Caco-2 (cell line): ENCODE measurements at regions of chr6 and their contacts with region 1.

Region 1: GRCh38 chr6:130825772-130826441 is 1.3 kb upstream of the SMLR1 start:
- DNase-seq: no peak
- H3K4me3 ChIP-seq: no peak overlapping the region
- H3K4me3 Mint-ChIP-seq: peak overlapping the region; percentile 67
- H3K27ac Mint-ChIP-seq: peak overlapping the region; percentile 19
- H3K4me1 ChIP-seq: peaks cover 48% of the 10 kb centered on the region
- H3K4me1 Mint-ChIP-seq: peaks cover 36% of the 10 kb centered on the region
- H3K27me3 ChIP-seq: no peaks in the 10 kb centered on the region
- H3K27me3 Mint-ChIP-seq: no peaks in the 10 kb centered on the region
- CTCF ChIP-seq: no peak

Region 2: GRCh38 chr6:130788954-130789353 is 37.0 kb before region 1 on chr6:
- CTCF ChIA-PET with region 1: no interaction called
- POLR2A ChIA-PET with region 1: no interaction called
- intact Hi-C with region 1: loop called (anchors 5 kb)
- DNase-seq: no peak
- H3K4me3 ChIP-seq: no peak overlapping the region
- H3K4me3 Mint-ChIP-seq: no peak overlapping the region
- H3K27ac Mint-ChIP-seq: no peak overlapping the region
- H3K4me1 ChIP-seq: no peaks in the 10 kb centered on the region
- H3K4me1 Mint-ChIP-seq: no peaks in the 10 kb centered on the region
- H3K27me3 ChIP-seq: no peaks in the 10 kb centered on the region
- H3K27me3 Mint-ChIP-seq: no peaks in the 10 kb centered on the region
- CTCF ChIP-seq: no peak

Region 3: DNA sequence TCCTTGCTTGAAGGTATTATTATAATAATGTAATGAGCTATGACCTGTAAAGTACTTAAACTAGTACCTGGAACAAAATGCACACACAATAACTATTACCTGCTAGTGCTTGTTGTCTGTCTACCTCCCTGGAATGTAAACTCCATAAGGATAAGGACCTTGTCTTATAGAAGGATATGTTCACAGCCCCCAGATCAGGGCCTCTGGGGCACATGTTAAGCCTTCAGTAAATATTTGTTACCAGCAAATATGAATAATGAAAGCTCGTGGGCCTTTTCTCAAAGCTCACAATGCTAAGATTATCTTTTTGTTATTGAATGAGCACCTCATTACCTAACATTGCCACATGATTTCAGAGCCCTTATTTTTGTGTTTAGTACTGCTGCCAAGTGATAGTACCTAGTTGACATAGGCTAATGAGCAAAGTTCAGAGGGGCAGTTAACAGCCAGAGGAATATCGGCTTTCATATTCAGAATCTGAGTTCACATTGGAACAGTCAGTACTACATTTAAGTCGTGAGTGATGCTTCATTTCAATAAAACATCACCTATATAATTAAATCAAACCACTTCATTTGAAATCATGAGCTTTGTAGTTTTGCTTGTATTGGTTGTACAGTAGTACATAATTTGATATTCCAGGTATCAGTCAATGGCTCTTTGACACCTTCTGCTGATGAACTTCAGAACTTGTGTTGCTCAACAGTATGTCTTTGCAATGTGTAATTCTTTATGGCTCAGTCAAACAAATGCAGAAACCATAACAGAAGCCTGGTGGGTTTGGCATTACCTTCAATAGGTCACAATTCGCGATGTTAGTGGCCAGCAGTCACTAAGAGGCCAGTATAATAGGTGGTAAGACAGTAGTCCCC is 10.5 kb before region 1 on chr6:
- CTCF ChIA-PET with region 1: interaction called, 3 read pairs
- POLR2A ChIA-PET with region 1: no interaction called
- intact Hi-C with region 1: loop called (anchors 1 kb)
- DNase-seq: peak; percentile 51 to 54
- H3K4me3 ChIP-seq: no peak overlapping the region
- H3K4me3 Mint-ChIP-seq: no peak overlapping the region
- H3K27ac Mint-ChIP-seq: no peak overlapping the region
- H3K4me1 ChIP-seq: peaks cover 15% of the 10 kb centered on the region
- H3K4me1 Mint-ChIP-seq: no peaks in the 10 kb centered on the region
- H3K27me3 ChIP-seq: no peaks in the 10 kb centered on the region
- H3K27me3 Mint-ChIP-seq: no peaks in the 10 kb centered on the region
- CTCF ChIP-seq: no peak